Caco-2 (cell line): ENCODE measurements at regions of chr7 and their contacts with region 1.

Region 1: GRCh38 chr7:11343818-11344413 is 370.2 kb downstream of the PHF14 start:
- DNase-seq: peak in 1 of 2 experiments; percentile 50
- H3K4me3 ChIP-seq: no peak overlapping the region
- H3K4me3 Mint-ChIP-seq: no peak overlapping the region
- H3K27ac Mint-ChIP-seq: no peak overlapping the region
- H3K4me1 ChIP-seq: no peaks in the 10 kb centered on the region
- H3K4me1 Mint-ChIP-seq: peaks cover 7% of the 10 kb centered on the region
- H3K27me3 ChIP-seq: no peaks in the 10 kb centered on the region; the same call in 1 of the 2 replicates
- H3K27me3 Mint-ChIP-seq: no peaks in the 10 kb centered on the region
- CTCF ChIP-seq: peak; percentile 64 to 68

Region 2: GRCh38 chr7:10412422-10413019 is 931.4 kb before region 1 on chr7:
- CTCF ChIA-PET with region 1: no interaction called
- POLR2A ChIA-PET with region 1: no interaction called
- intact Hi-C with region 1: loop called (anchors 10 kb)
- DNase-seq: peak in 1 of 2 experiments; percentile 52
- H3K4me3 ChIP-seq: no peak overlapping the region
- H3K4me3 Mint-ChIP-seq: no peak overlapping the region
- H3K27ac Mint-ChIP-seq: no peak overlapping the region
- H3K4me1 ChIP-seq: no peaks in the 10 kb centered on the region
- H3K4me1 Mint-ChIP-seq: no peaks in the 10 kb centered on the region
- H3K27me3 ChIP-seq: no peaks in the 10 kb centered on the region
- H3K27me3 Mint-ChIP-seq: peaks cover 3% of the 10 kb centered on the region
- CTCF ChIP-seq: peak; percentile 48 to 69

Region 3: GRCh38 chr7:10708447-10708846 is 635.5 kb before region 1 on chr7:
- CTCF ChIA-PET with region 1: no interaction called
- POLR2A ChIA-PET with region 1: no interaction called
- intact Hi-C with region 1: loop called (anchors 5 kb)
- DNase-seq: peak; percentile 31 to 44
- H3K4me3 ChIP-seq: no peak overlapping the region
- H3K4me3 Mint-ChIP-seq: no peak overlapping the region
- H3K27ac Mint-ChIP-seq: no peak overlapping the region
- H3K4me1 ChIP-seq: no peaks in the 10 kb centered on the region
- H3K4me1 Mint-ChIP-seq: no peaks in the 10 kb centered on the region
- H3K27me3 ChIP-seq: no peaks in the 10 kb centered on the region
- H3K27me3 Mint-ChIP-seq: peaks cover 2% of the 10 kb centered on the region
- CTCF ChIP-seq: peak; percentile 46 to 64

Region 4: DNA sequence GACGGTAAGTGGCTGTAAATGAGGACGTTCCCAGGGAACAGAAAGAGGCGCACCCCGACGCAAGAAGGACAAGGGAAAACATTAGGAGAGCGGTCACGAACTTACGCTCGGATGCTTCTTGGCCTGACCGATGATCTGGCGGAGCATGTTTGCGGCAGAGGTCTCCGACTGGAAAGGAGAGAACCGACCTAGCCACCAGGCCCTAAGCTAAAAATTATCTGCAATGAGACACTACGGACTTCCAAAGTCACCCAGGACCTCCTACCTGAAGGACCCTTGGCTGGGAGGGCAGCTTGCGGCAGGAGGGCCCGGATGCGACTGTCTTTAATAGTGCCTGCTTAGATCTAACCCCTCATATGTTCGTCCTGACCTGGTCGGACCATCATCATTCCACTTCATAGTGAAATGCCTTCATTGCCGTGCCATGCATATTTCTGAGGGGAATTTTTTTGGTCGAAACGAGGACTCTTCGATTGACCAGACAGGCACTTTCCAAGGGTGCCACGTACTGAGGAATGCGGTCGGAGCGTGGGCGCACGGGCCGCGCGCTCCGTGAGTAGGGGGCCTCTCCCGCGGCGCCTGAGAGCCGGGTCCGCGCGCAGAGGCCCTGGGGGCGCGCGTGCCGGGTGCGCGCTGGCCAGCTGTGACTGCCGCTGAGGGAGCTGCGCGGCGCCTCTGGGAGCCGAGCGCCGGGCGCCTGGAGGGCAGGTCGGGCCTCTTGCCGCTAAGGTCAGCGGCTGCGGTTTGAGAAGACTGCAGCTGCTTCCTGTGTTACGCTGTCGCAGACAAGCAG is 403.8 kb before region 1 on chr7:
- CTCF ChIA-PET with region 1: no interaction called
- POLR2A ChIA-PET with region 1: no interaction called
- intact Hi-C with region 1: loop called (anchors 1 kb)
- DNase-seq: peak; percentile 93 to 96
- H3K4me3 ChIP-seq: peak overlapping the region; percentile 51
- H3K4me3 Mint-ChIP-seq: no peak overlapping the region
- H3K27ac Mint-ChIP-seq: no peak overlapping the region
- H3K4me1 ChIP-seq: peaks cover 3% of the 10 kb centered on the region; the same call in 1 of the 2 replicates
- H3K4me1 Mint-ChIP-seq: no peaks in the 10 kb centered on the region
- H3K27me3 ChIP-seq: no peaks in the 10 kb centered on the region
- H3K27me3 Mint-ChIP-seq: no peaks in the 10 kb centered on the region
- CTCF ChIP-seq: no peak

Region 5: GRCh38 chr7:11153694-11154093 is 190.2 kb before region 1 on chr7:
- CTCF ChIA-PET with region 1: no interaction called
- POLR2A ChIA-PET with region 1: no interaction called
- intact Hi-C with region 1: loop called (anchors 1 kb)
- DNase-seq: no peak
- H3K4me3 ChIP-seq: no peak overlapping the region
- H3K4me3 Mint-ChIP-seq: no peak overlapping the region
- H3K27ac Mint-ChIP-seq: no peak overlapping the region
- H3K4me1 ChIP-seq: no peaks in the 10 kb centered on the region
- H3K4me1 Mint-ChIP-seq: no peaks in the 10 kb centered on the region
- H3K27me3 ChIP-seq: no peaks in the 10 kb centered on the region
- H3K27me3 Mint-ChIP-seq: no peaks in the 10 kb centered on the region
- CTCF ChIP-seq: no peak

Region 6: DNA sequence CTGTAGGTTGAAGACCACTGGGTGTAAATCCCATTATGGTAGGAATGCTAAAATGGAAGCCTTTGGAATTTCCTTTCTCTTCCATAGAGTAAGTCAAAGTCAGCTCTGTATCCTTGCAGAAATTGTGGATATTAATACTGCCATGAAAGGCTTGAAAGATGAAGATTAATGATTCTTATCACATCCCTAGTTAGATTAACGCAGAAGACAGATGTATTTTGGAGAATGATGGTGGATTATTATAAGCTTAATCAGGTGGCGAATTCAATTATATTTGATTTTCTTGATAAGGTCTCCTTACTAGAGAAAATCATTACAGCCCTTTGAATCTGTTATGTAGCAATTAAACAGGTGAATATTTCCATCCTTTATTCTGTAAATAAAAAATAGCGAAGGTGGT is 100.2 kb before region 1 on chr7:
- CTCF ChIA-PET with region 1: no interaction called
- POLR2A ChIA-PET with region 1: no interaction called
- intact Hi-C with region 1: loop called (anchors 2 kb)
- DNase-seq: no peak
- H3K4me3 ChIP-seq: no peak overlapping the region
- H3K4me3 Mint-ChIP-seq: no peak overlapping the region
- H3K27ac Mint-ChIP-seq: no peak overlapping the region
- H3K4me1 ChIP-seq: peaks cover 4% of the 10 kb centered on the region; the same call in 1 of the 2 replicates
- H3K4me1 Mint-ChIP-seq: no peaks in the 10 kb centered on the region
- H3K27me3 ChIP-seq: no peaks in the 10 kb centered on the region
- H3K27me3 Mint-ChIP-seq: no peaks in the 10 kb centered on the region
- CTCF ChIP-seq: no peak

Region 7: DNA sequence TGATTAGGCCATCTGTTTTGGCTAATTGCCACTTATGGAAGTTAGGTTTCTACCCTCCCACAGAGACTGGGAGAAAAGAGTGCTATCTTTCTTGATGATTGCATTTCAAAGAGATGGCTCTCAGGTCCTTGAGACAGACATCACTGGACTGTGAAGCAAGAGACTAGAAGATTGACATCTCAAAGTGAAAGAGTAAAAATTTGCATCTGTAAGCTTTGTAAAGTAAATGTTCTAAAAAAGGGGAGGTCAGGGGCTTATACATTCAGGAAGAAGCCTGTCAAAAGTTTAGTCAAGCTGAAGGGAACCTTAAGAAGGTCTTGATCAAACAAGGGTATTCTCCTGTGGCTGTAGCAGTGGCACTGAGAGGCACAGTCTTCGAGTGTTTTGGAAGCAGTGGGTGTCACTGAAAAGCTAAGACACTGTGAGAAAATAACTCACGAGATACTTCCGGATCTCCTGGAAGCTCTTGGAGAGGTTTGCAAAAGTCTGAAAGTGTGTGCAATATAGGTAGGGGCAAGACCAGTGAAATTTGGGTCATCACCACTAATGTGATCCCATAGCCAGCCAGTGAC is 28.1 kb before region 1 on chr7:
- CTCF ChIA-PET with region 1: no interaction called
- POLR2A ChIA-PET with region 1: no interaction called
- intact Hi-C with region 1: no loop called
- DNase-seq: no peak
- H3K4me3 ChIP-seq: no peak overlapping the region
- H3K4me3 Mint-ChIP-seq: no peak overlapping the region
- H3K27ac Mint-ChIP-seq: no peak overlapping the region
- H3K4me1 ChIP-seq: no peaks in the 10 kb centered on the region
- H3K4me1 Mint-ChIP-seq: no peaks in the 10 kb centered on the region
- H3K27me3 ChIP-seq: no peaks in the 10 kb centered on the region
- H3K27me3 Mint-ChIP-seq: peaks cover 2% of the 10 kb centered on the region
- CTCF ChIP-seq: no peak